Ascending aorta (tissue), 2 donors: ENCODE measurements at regions of chr10 and their contacts with region 1.

Region 1: GRCh38 chr10:67884313-67884841 is at the start of gene SIRT1:
- DNase-seq: peak; percentile 85 to 98
- H3K4me3 ChIP-seq: peak within 1 kb of the TSS; percentile 82 to 85
- H3K27ac ChIP-seq: peak within 1 kb of the TSS; percentile 91 to 94
- H3K4me1 ChIP-seq: peaks cover 0 to 14% of the 10 kb centered on the region in 2 donors
- H3K27me3 ChIP-seq: no peaks in the 10 kb centered on the region
- CTCF ChIP-seq: peak in 1 of 3 experiments; percentile 25
- total RNA-seq, gene SIRT1: 7.6 TPM

Region 2: GRCh38 chr10:67849331-67850011 is 34.9 kb before region 1 on chr10:
- intact Hi-C with region 1: loop called (anchors 1 kb)
- DNase-seq: peak; percentile 78 to 98
- H3K4me3 ChIP-seq: peak overlapping the region; percentile 77 to 87
- H3K27ac ChIP-seq: peak overlapping the region; percentile 92 to 94
- H3K4me1 ChIP-seq: peaks cover 3 to 5% of the 10 kb centered on the region in 2 donors
- H3K27me3 ChIP-seq: no peaks in the 10 kb centered on the region
- CTCF ChIP-seq: no peak

Region 3: DNA sequence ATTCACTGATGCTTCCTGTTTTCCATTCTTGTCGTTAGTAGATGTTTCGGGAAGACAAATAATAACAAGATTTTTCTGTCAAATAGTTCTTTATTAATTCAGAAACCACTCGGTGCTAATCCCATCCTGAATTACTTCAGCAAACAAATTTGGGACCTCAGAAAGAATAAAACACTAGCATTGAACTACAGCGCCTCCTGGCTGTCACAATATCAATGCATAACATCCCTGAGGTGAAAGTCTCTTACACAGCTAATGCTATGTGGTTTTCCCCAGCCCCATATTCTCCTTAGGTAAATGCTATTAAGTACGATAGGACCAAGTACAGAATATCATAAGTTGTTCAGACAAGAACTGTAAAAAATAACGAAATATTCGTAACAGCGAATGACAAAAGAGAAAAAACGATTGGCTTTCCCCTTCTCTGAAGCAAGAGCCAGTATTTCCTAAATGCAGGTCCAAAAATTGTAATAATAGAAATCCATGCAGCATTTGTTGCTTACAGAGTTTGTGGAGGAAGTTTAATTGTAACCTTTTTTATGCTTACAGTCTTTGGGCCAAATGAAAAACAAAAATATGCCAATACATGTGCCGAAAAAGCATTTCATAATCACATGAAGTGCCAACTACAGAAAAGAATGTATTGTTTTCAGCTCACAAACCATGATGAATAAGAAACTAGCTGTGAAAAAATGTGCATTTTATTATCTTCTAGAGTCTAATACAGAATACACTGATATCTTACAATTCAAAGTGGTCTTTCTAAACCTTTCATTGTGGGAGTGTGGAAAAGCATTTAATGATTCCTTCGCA is 272.2 kb after region 1 on chr10:
- intact Hi-C with region 1: loop called (anchors 10 kb)
- DNase-seq: peak in 1 of 2 donors; percentile 81
- H3K4me3 ChIP-seq: no peak overlapping the region
- H3K27ac ChIP-seq: no peak overlapping the region
- H3K4me1 ChIP-seq: peaks cover 0 to 9% of the 10 kb centered on the region in 2 donors
- H3K27me3 ChIP-seq: no peaks in the 10 kb centered on the region
- CTCF ChIP-seq: peak; percentile 59 to 79 (median 69)

Region 4: DNA sequence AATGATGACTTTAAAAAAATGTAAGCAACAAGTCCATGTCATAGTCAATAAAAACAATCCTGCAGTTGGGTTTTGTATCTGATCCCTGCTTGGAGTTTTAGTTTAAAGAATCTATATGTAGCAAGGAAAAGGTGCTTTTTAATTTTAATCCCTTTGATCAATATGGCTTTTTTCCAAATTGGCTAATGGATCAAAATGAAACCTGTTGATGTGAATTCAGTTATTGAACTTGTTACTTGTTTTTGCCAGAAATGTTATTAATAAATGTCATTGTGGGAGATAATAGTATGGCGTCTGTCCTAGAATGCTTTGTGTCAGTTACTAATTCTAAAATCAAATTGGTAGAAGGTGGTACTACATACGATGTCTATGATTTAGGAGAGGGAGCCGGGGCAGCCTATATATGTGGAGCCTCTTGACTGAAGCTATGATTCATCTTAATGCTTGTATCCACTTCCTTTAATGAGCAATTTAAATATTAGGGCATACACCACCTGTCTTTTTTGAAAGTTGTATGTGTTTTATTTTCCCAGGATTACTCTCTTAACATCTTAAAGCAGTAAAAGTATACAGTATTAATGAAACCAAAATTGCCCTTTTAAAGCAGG is 458.6 kb after region 1 on chr10:
- intact Hi-C with region 1: no loop called
- DNase-seq: no peak
- H3K4me3 ChIP-seq: no peak overlapping the region
- H3K27ac ChIP-seq: no peak overlapping the region
- H3K4me1 ChIP-seq: peaks cover 0 to 9% of the 10 kb centered on the region in 2 donors
- H3K27me3 ChIP-seq: no peaks in the 10 kb centered on the region
- CTCF ChIP-seq: no peak

Region 5: GRCh38 chr10:68406815-68407548 is 522.6 kb after region 1 on chr10 and contains the start of gene RUFY2:
- intact Hi-C with region 1: loop called (anchors 10 kb)
- DNase-seq: peak; percentile 19 to 86
- H3K4me3 ChIP-seq: peak within 1 kb of the TSS; percentile 86 to 89
- H3K27ac ChIP-seq: peak within 1 kb of the TSS; percentile 91 to 92
- H3K4me1 ChIP-seq: no peaks in the 10 kb centered on the region
- H3K27me3 ChIP-seq: no peaks in the 10 kb centered on the region
- CTCF ChIP-seq: peak in 2 of 3 experiments; percentile 52 to 99
- total RNA-seq, gene RUFY2: 7.5 TPM